Activated CD4-positive, alpha-beta T cell treated with anti-CD3 and anti-CD28 coated beads, Interleukin-2, amount 10 ng/mL, durations not matched to agents 7 days and 5 days (primary cell): ENCODE measurements at regions of chr1 and their contacts with region 1.

Region 1: DNA sequence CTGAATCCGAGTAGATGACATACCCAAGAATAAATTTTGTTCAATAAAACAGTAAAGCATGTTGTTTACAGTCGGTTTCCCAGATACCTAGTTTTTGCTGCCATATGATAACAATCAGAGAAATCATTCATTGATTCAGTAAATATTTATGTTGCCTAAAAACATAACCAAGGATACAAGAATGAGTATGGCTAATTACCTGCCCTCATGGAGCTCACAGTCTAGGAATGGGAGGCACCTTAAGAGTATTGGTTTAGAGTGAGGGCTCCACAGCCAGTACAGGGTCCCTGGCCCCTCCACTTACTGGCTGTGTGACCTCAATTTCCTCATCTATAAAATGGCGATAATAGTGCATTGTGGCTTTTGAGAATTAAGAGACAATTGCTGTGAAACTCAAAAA is 921 bp downstream of the ATP5PB start:
- DNase-seq: no peak
- H3K4me3 Mint-ChIP-seq: peak overlapping the region; percentile 100
- H3K27ac Mint-ChIP-seq: peak overlapping the region; percentile 97
- H3K4me1 Mint-ChIP-seq: peaks cover 78% of the 10 kb centered on the region
- H3K27me3 Mint-ChIP-seq: no peaks in the 10 kb centered on the region

Region 2: GRCh38 chr1:111392460-111392945 is 57.7 kb before region 1 on chr1:
- CTCF ChIA-PET with region 1: no interaction called
- POLR2A ChIA-PET with region 1: no interaction called
- DNase-seq: no peak
- H3K4me3 Mint-ChIP-seq: no peak overlapping the region
- H3K27ac Mint-ChIP-seq: no peak overlapping the region
- H3K4me1 Mint-ChIP-seq: no peaks in the 10 kb centered on the region
- H3K27me3 Mint-ChIP-seq: peaks cover 25% of the 10 kb centered on the region

Region 3: DNA sequence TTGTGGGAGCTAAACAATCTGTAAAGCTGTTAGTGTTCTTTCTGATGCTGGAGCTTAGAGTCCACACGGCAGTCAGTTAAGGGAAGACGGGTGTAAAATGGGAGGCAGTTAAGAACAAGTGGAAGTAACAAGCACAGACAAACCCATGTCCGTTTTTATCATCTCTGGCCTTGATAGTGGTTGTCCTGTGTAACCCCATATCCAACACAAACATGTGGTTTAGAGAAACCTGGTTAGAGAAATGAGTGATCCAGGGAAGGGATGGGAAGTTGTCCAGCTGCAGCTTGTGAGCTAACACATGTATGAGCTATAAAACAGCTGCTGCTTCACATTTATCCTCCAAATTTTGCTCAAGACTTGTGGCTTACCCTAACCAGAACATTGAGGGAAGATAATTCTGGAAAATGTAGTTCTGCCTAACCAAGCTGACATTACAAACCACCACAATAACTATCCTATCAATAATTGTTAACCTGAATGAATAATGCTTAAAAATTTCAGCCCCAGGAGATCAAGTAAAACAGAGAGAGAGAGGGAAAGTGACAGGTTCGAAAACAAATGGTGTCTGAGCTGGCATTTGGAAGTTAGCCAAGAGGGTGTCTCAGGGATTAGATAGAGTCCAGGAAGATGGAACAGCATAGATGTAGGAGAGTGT is 13.0 kb after region 1 on chr1:
- CTCF ChIA-PET with region 1: interaction called, 6 read pairs
- POLR2A ChIA-PET with region 1: interaction called, 10 read pairs
- DNase-seq: no peak
- H3K4me3 Mint-ChIP-seq: no peak overlapping the region
- H3K27ac Mint-ChIP-seq: no peak overlapping the region
- H3K4me1 Mint-ChIP-seq: peaks cover 11% of the 10 kb centered on the region
- H3K27me3 Mint-ChIP-seq: no peaks in the 10 kb centered on the region